ENCODE measurements at regions of chr2 and their contacts with region 1.

Region 1: GRCh38 chr2:61443342-61444041 is 27.4 kb downstream of the USP34 start:
- DNase-seq: peak; percentile 74
- ATAC-seq: peak; percentile 82
- H3K4me3 ChIP-seq: no peak overlapping the region
- H3K4me3 Mint-ChIP-seq: peak overlapping the region; percentile 72
- H3K27ac ChIP-seq: peak overlapping the region; percentile 15 to 28
- H3K27ac Mint-ChIP-seq: peak overlapping the region; percentile 66
- H3K4me1 ChIP-seq: peaks cover 50 to 57% of the 10 kb centered on the region in 2 donors
- H3K4me1 Mint-ChIP-seq: peaks cover 75% of the 10 kb centered on the region
- H3K27me3 ChIP-seq: no peaks in the 10 kb centered on the region
- H3K27me3 Mint-ChIP-seq: no peaks in the 10 kb centered on the region
- CTCF ChIP-seq: no peak

Region 2: GRCh38 chr2:60891180-60891579 is 552.3 kb before region 1 on chr2:
- CTCF ChIA-PET with region 1: no interaction called
- POLR2A ChIA-PET with region 1: no interaction called
- intact Hi-C with region 1: no loop called
- DNase-seq: no peak
- ATAC-seq: no peak
- H3K4me3 ChIP-seq: no peak overlapping the region
- H3K4me3 Mint-ChIP-seq: no peak overlapping the region
- H3K27ac ChIP-seq: peak overlapping the region in 1 of 2 donors; percentile 33
- H3K27ac Mint-ChIP-seq: no peak overlapping the region
- H3K4me1 ChIP-seq: peaks cover 26 to 53% of the 10 kb centered on the region in 2 donors
- H3K4me1 Mint-ChIP-seq: peaks cover 50% of the 10 kb centered on the region
- H3K27me3 ChIP-seq: no peaks in the 10 kb centered on the region
- H3K27me3 Mint-ChIP-seq: no peaks in the 10 kb centered on the region
- CTCF ChIP-seq: no peak

Region 3: DNA sequence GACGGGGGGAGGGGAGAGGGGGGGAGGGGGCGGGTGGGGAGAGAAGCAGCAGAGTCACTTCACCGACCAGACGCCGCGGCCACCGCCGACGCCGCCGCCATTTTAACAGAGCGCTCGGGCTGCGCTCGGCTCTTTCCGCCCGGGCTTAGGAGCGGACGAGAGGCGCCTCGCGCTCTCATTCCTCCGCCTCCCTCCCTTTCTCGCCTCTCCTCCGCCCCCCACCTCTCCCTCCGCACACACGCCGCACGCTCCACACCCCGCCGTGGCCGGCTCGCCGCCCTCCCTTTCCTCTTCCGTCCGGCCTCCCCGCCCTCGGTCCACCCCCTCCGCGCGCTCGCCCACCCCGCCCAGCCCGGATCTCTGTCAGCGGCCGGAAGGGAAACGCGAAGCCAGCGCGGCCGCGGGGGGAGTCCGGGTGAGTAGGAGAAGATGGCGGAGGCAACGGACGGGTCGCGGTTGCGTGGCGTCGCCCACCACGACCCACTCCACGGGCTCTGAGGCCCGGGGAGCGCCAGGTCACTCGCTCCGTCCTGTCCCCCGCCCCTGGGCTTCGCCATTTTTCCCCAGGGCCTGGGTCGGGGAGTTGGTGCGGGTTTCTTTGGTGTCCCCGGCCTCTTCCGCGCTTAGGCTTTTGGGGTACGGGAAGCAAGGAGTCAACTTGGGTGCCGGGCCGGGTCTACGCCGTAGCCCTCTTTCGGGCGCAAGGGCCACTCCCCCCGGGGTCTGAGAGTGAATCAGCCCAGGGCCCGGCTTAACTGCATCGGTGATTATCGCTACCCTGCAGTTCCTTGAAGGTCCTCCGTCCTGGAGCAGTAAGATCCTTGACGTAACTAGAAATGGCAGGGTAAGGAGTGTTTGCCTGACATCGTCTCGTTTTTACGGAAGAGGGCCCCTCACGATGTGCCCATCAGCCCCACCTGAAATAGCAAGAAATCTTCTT is 27.7 kb after region 1 on chr2 and contains the start of gene USP34:
- CTCF ChIA-PET with region 1: no interaction called
- POLR2A ChIA-PET with region 1: interaction called, 12 read pairs
- intact Hi-C with region 1: loop called (anchors 2 kb)
- DNase-seq: peak; percentile 96
- ATAC-seq: peak; percentile 79
- H3K4me3 ChIP-seq: peak within 1 kb of the TSS; percentile 69 to 95 (median 85)
- H3K4me3 Mint-ChIP-seq: peak within 1 kb of the TSS; percentile 93
- H3K27ac ChIP-seq: peak within 1 kb of the TSS; percentile 96 to 99
- H3K27ac Mint-ChIP-seq: peak within 1 kb of the TSS; percentile 96
- H3K4me1 ChIP-seq: peaks cover 24% of the 10 kb centered on the region in 2 donors
- H3K4me1 Mint-ChIP-seq: peaks cover 29% of the 10 kb centered on the region
- H3K27me3 ChIP-seq: no peaks in the 10 kb centered on the region
- H3K27me3 Mint-ChIP-seq: no peaks in the 10 kb centered on the region
- CTCF ChIP-seq: no peak
- total RNA-seq, gene USP34: 311 and 320 TPM in 2 replicates

Measured in B cell (primary cell).